A673 (cell line): ENCODE measurements at regions of chr2 and their contacts with region 1.

Region 1: GRCh38 chr2:41981417-41981816 is 66.4 kb upstream of the PKDCC start:
- DNase-seq: peak; percentile 59
- H3K4me3 ChIP-seq: no peak overlapping the region
- H3K27ac ChIP-seq: peak overlapping the region; percentile 62
- H3K4me1 ChIP-seq: peaks cover 20% of the 10 kb centered on the region
- H3K27me3 ChIP-seq: no peaks in the 10 kb centered on the region
- CTCF ChIP-seq: no peak

Region 2: GRCh38 chr2:42072349-42073118 is 91.1 kb after region 1 on chr2:
- CTCF ChIA-PET with region 1: no interaction called
- POLR2A ChIA-PET with region 1: no interaction called
- intact Hi-C with region 1: loop called (anchors 5 kb)
- DNase-seq: no peak
- H3K4me3 ChIP-seq: no peak overlapping the region
- H3K27ac ChIP-seq: no peak overlapping the region
- H3K4me1 ChIP-seq: peaks cover 12% of the 10 kb centered on the region
- H3K27me3 ChIP-seq: no peaks in the 10 kb centered on the region
- CTCF ChIP-seq: no peak

Region 3: DNA sequence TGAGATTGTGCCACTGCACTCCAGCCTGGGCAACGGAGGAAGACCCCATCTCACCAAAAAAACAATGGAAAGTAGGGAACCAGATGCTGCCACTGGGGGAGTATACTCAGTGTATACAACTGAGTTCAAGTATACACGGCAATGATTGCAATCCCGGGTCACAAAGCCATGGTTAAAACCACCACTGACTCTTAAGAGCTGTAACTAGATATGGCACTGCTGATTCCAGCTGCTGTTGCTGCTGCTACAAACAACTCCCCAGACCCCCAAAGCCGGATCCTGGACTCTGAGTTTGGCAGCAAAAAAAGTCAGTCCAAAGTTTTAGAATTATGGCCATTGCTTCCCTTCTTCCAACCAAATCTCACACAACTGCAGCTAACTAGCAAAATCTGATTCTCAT is 423.3 kb after region 1 on chr2:
- CTCF ChIA-PET with region 1: no interaction called
- POLR2A ChIA-PET with region 1: no interaction called
- intact Hi-C with region 1: no loop called
- DNase-seq: no peak
- H3K4me3 ChIP-seq: no peak overlapping the region
- H3K27ac ChIP-seq: no peak overlapping the region
- H3K4me1 ChIP-seq: no peaks in the 10 kb centered on the region
- H3K27me3 ChIP-seq: no peaks in the 10 kb centered on the region
- CTCF ChIP-seq: no peak